Naive thymus-derived CD4-positive, alpha-beta T cell (primary cell): ENCODE measurements at regions of chr5 and their contacts with region 1.

Region 1: GRCh38 chr5:44774279-44774880 is 34.4 kb upstream of the MRPS30 start:
- DNase-seq: peak in 5 of 9 donors; percentile 10 to 23 (median 14)
- ATAC-seq: no peak
- H3K4me3 ChIP-seq: no peak overlapping the region
- H3K4me3 Mint-ChIP-seq: no peak overlapping the region
- H3K27ac ChIP-seq: no peak overlapping the region
- H3K27ac Mint-ChIP-seq: no peak overlapping the region
- H3K4me1 ChIP-seq: no peaks in the 10 kb centered on the region
- H3K4me1 Mint-ChIP-seq: no peaks in the 10 kb centered on the region
- H3K27me3 ChIP-seq: no peaks in the 10 kb centered on the region
- H3K27me3 Mint-ChIP-seq: peaks cover 7 to 21% (median 12%) of the 10 kb centered on the region in 5 donors

Region 2: GRCh38 chr5:43582082-43583005 is 1192.0 kb before region 1 on chr5:
- CTCF ChIA-PET with region 1: no interaction called
- POLR2A ChIA-PET with region 1: no interaction called
- intact Hi-C with region 1: no loop called
- DNase-seq: no peak
- ATAC-seq: no peak
- H3K4me3 ChIP-seq: no peak overlapping the region
- H3K4me3 Mint-ChIP-seq: no peak overlapping the region
- H3K27ac ChIP-seq: no peak overlapping the region
- H3K27ac Mint-ChIP-seq: peak overlapping the region in 1 of 9 donors; percentile 36
- H3K4me1 ChIP-seq: no peaks in the 10 kb centered on the region
- H3K4me1 Mint-ChIP-seq: no peaks in the 10 kb centered on the region
- H3K27me3 ChIP-seq: no peaks in the 10 kb centered on the region
- H3K27me3 Mint-ChIP-seq: no peaks in the 10 kb centered on the region

Region 3: GRCh38 chr5:43631182-43631910 is 1143.0 kb before region 1 on chr5:
- CTCF ChIA-PET with region 1: interaction called, 3 read pairs
- POLR2A ChIA-PET with region 1: no interaction called
- intact Hi-C with region 1: loop called in 1 of 2 experiments (anchors 10 kb)
- DNase-seq: peak in 7 of 9 donors; percentile 8 to 51 (median 34)
- ATAC-seq: peak; percentile 94
- H3K4me3 ChIP-seq: no peak overlapping the region
- H3K4me3 Mint-ChIP-seq: no peak overlapping the region
- H3K27ac ChIP-seq: no peak overlapping the region
- H3K27ac Mint-ChIP-seq: peak overlapping the region in 2 of 9 donors; percentile 26 to 43
- H3K4me1 ChIP-seq: no peaks in the 10 kb centered on the region
- H3K4me1 Mint-ChIP-seq: peaks cover 10 to 54% (median 33%) of the 10 kb centered on the region in 7 donors
- H3K27me3 ChIP-seq: no peaks in the 10 kb centered on the region
- H3K27me3 Mint-ChIP-seq: no peaks in the 10 kb centered on the region

Region 4: GRCh38 chr5:43729846-43730478 is 1044.4 kb before region 1 on chr5:
- CTCF ChIA-PET with region 1: no interaction called
- POLR2A ChIA-PET with region 1: no interaction called
- intact Hi-C with region 1: loop called in 1 of 2 experiments (anchors 1 kb)
- DNase-seq: no peak
- ATAC-seq: no peak
- H3K4me3 ChIP-seq: no peak overlapping the region
- H3K4me3 Mint-ChIP-seq: no peak overlapping the region
- H3K27ac ChIP-seq: no peak overlapping the region
- H3K27ac Mint-ChIP-seq: no peak overlapping the region
- H3K4me1 ChIP-seq: no peaks in the 10 kb centered on the region
- H3K4me1 Mint-ChIP-seq: peaks cover 0 to 2% (median 0%) of the 10 kb centered on the region in 7 donors
- H3K27me3 ChIP-seq: no peaks in the 10 kb centered on the region
- H3K27me3 Mint-ChIP-seq: peaks cover 5 to 16% (median 11%) of the 10 kb centered on the region in 5 donors

Region 5: GRCh38 chr5:44536650-44537260 is 237.6 kb before region 1 on chr5:
- CTCF ChIA-PET with region 1: no interaction called
- POLR2A ChIA-PET with region 1: no interaction called
- intact Hi-C with region 1: loop called (anchors 1 to 2 kb)
- DNase-seq: no peak
- ATAC-seq: no peak
- H3K4me3 ChIP-seq: no peak overlapping the region
- H3K4me3 Mint-ChIP-seq: no peak overlapping the region
- H3K27ac ChIP-seq: no peak overlapping the region
- H3K27ac Mint-ChIP-seq: no peak overlapping the region
- H3K4me1 ChIP-seq: no peaks in the 10 kb centered on the region
- H3K4me1 Mint-ChIP-seq: no peaks in the 10 kb centered on the region
- H3K27me3 ChIP-seq: no peaks in the 10 kb centered on the region
- H3K27me3 Mint-ChIP-seq: peaks cover 0 to 5% (median 0%) of the 10 kb centered on the region in 5 donors

Region 6: DNA sequence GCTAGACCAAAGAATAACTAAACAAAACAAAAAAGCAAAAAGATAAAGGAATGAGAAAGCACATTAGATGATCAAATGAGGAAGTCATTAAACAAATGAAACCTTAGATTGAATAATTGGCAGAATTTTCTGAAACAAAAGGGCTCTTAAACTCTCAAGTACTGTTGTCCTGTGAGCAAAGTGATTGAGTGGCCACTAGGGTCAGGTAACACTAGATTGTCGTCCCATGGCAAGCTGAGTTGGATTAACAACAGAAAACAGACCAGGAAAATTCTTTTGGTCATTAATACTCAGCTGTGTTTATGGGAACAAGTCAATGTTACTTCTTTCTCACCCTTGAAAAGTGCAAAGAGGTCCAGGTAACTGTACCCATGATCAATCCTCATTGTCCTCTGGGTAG is 47.3 kb before region 1 on chr5:
- CTCF ChIA-PET with region 1: no interaction called
- POLR2A ChIA-PET with region 1: no interaction called
- intact Hi-C with region 1: no loop called
- DNase-seq: no peak
- ATAC-seq: no peak
- H3K4me3 ChIP-seq: no peak overlapping the region
- H3K4me3 Mint-ChIP-seq: no peak overlapping the region
- H3K27ac ChIP-seq: no peak overlapping the region
- H3K27ac Mint-ChIP-seq: no peak overlapping the region
- H3K4me1 ChIP-seq: no peaks in the 10 kb centered on the region
- H3K4me1 Mint-ChIP-seq: no peaks in the 10 kb centered on the region
- H3K27me3 ChIP-seq: no peaks in the 10 kb centered on the region
- H3K27me3 Mint-ChIP-seq: peaks cover 0 to 4% (median 0%) of the 10 kb centered on the region in 5 donors